ENCODE measurements at regions of chrX and their contacts with region 1.

Region 1: DNA sequence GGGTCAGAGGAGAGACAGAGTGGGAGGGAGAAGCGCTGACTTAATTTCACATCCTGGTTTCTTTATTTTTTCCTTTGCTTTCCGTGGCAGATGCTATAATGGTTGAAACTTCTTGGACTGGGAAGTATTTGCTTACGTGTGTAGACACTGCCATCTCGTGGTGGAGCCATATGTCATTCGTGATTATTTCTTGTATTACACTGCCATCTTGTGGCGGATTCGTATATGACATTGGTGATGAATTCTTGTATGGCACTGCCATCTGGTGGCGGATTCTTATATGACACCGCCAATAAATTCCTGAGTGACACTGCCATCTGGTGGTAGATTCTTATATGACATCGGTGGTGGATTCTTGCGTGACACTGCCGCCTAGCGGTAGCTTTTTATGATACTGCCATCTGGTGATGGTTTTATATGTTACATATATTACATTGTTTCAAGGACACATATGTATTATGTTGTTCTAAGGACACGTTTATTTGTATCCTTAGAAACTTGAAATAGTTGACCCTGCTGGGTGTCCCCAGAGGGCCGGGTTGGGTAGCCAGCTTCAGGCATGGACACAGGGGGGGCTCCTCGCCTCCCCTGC is 37.3 kb upstream of the CLCN4 start:
- DNase-seq: peak; percentile 73
- ATAC-seq: peak; percentile 60
- H3K4me3 ChIP-seq: no peak overlapping the region
- H3K27ac ChIP-seq: no peak overlapping the region
- H3K4me1 ChIP-seq: peaks cover 31% of the 10 kb centered on the region
- H3K27me3 ChIP-seq: no peaks in the 10 kb centered on the region
- CTCF ChIP-seq: peak; percentile 98 to 100 (median 100)
- EP300 ChIP-seq: no peak
- POLR2A ChIP-seq: no peak
- RAD21 ChIP-seq: peak; percentile 89

Region 2: DNA sequence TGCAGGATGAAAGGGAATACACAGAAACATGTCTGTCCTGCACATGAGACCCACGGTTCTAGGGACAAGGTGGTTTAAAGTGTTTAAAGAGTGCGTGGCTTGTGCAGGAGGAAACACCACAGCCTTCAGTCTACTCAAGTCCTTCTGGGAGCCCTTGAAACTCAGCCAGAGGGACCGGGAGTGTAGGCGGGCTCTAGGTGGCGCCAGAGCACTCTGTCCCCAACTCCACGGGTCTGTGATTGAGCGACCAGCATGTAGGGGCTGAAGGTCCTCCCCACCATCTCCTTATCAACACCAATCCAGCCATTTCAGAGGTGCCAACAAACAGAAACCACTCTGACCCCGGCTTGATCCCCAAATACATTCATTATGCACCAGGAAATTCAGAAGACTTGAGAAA is 234.3 kb before region 1 on chrX:
- CTCF ChIA-PET with region 1: interaction called, 25 read pairs
- POLR2A ChIA-PET with region 1: no interaction called
- RAD21 ChIA-PET with region 1: interaction called, 7 read pairs
- SMC1A ChIA-PET with region 1: interaction called, 11 read pairs
- in situ Hi-C with region 1: no loop called
- intact Hi-C with region 1: loop called (anchors 1 kb)
- DNase-seq: no peak
- ATAC-seq: peak; percentile 99
- H3K4me3 ChIP-seq: no peak overlapping the region
- H3K27ac ChIP-seq: no peak overlapping the region
- H3K4me1 ChIP-seq: no peaks in the 10 kb centered on the region
- H3K27me3 ChIP-seq: no peaks in the 10 kb centered on the region; a peak in 2 of 4 replicates
- CTCF ChIP-seq: peak; percentile 79 to 90 (median 85); a peak in 5 of 6 replicates
- EP300 ChIP-seq: no peak
- POLR2A ChIP-seq: no peak
- RAD21 ChIP-seq: peak; percentile 79

Region 3: GRCh38 chrX:9995855-9996339 is 123.6 kb before region 1 on chrX:
- CTCF ChIA-PET with region 1: interaction called, 412 read pairs
- POLR2A ChIA-PET with region 1: interaction called, 42 read pairs
- RAD21 ChIA-PET with region 1: interaction called, 424 read pairs
- SMC1A ChIA-PET with region 1: interaction called, 281 read pairs
- in situ Hi-C with region 1: loop called (anchors 5 kb)
- intact Hi-C with region 1: loop called (anchors 1 kb)
- DNase-seq: no peak
- ATAC-seq: peak; percentile 60
- H3K4me3 ChIP-seq: no peak overlapping the region
- H3K27ac ChIP-seq: no peak overlapping the region
- H3K4me1 ChIP-seq: peaks cover 9% of the 10 kb centered on the region
- H3K27me3 ChIP-seq: no peaks in the 10 kb centered on the region
- CTCF ChIP-seq: peak; percentile 94 to 99 (median 96)
- EP300 ChIP-seq: no peak
- POLR2A ChIP-seq: no peak
- RAD21 ChIP-seq: peak; percentile 98

Region 4: GRCh38 chrX:10052906-10053625 is 66.4 kb before region 1 on chrX:
- CTCF ChIA-PET with region 1: interaction called, 13 read pairs
- POLR2A ChIA-PET with region 1: no interaction called
- RAD21 ChIA-PET with region 1: interaction called, 4 read pairs
- SMC1A ChIA-PET with region 1: interaction called, 5 read pairs
- in situ Hi-C with region 1: no loop called
- intact Hi-C with region 1: no loop called
- DNase-seq: no peak
- ATAC-seq: peak; percentile 59
- H3K4me3 ChIP-seq: no peak overlapping the region
- H3K27ac ChIP-seq: no peak overlapping the region
- H3K4me1 ChIP-seq: no peaks in the 10 kb centered on the region
- H3K27me3 ChIP-seq: peaks cover 0 to 4% of the 10 kb centered on the region in 2 experiments; a peak in 1 of 4 replicates
- CTCF ChIP-seq: no peak
- EP300 ChIP-seq: no peak
- POLR2A ChIP-seq: no peak
- RAD21 ChIP-seq: no peak; the same call in 1 of the 2 replicates

Region 5: DNA sequence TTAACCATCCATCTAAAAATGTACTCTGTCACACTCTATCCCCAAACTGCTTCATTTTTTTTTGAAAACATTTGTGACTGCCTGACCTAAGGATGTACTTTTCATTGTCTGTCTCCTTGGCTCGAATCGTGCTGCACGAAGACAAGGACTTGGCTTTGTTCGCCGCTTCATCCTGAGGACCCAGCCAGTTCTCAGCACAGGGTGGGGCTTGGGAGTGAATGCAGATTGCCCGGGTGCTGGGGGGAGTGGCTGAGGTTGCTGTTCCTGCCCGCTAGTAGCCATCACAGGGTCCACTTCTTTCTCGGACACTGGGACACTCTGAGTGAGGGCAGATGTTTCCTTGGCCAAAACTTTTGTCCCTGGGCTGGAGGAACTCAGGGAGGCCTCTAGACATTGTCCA is 32.8 kb before region 1 on chrX:
- CTCF ChIA-PET with region 1: interaction called, 65 read pairs
- POLR2A ChIA-PET with region 1: interaction called, 3 read pairs
- RAD21 ChIA-PET with region 1: interaction called, 89 read pairs
- SMC1A ChIA-PET with region 1: interaction called, 206 read pairs
- in situ Hi-C with region 1: no loop called
- intact Hi-C with region 1: loop called (anchors 2 kb)
- DNase-seq: no peak
- ATAC-seq: no peak
- H3K4me3 ChIP-seq: no peak overlapping the region
- H3K27ac ChIP-seq: no peak overlapping the region
- H3K4me1 ChIP-seq: peaks cover 21% of the 10 kb centered on the region
- H3K27me3 ChIP-seq: no peaks in the 10 kb centered on the region
- CTCF ChIP-seq: no peak
- EP300 ChIP-seq: no peak
- POLR2A ChIP-seq: no peak
- RAD21 ChIP-seq: no peak

Region 6: DNA sequence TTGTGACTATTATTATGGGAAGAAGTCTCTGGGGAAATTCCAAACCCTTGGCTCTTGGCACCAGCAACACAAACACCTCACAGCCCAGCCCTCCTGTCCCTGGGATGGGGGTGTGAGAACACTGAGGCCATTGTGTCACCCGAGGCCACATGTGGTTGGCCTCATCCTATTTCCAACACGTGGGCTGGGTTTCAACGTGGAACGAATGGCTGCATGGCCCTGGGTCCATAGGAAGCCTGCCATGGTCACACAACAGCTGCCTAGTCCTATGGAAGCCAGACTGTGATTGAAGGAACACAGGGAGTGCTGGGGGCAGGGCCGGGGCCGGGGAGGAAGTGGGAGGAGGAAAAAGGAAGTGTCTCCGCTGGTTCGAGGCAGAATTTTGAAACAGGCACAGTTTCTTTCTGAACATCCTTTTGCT is 47.2 kb after region 1 on chrX:
- CTCF ChIA-PET with region 1: interaction called, 23 read pairs
- POLR2A ChIA-PET with region 1: no interaction called
- RAD21 ChIA-PET with region 1: interaction called, 5 read pairs
- SMC1A ChIA-PET with region 1: interaction called, 5 read pairs
- in situ Hi-C with region 1: no loop called
- intact Hi-C with region 1: loop called (anchors 2 kb)
- DNase-seq: no peak
- ATAC-seq: peak; percentile 35
- H3K4me3 ChIP-seq: no peak overlapping the region
- H3K27ac ChIP-seq: no peak overlapping the region
- H3K4me1 ChIP-seq: peaks cover 17% of the 10 kb centered on the region
- H3K27me3 ChIP-seq: 0 out of 4 replicates have a peak, but pooled peaks cover 0 to under 1% of the 10 kb centered on the region in 2 experiments
- CTCF ChIP-seq: no peak
- EP300 ChIP-seq: no peak
- POLR2A ChIP-seq: no peak
- RAD21 ChIP-seq: no peak

Measured in GM12878 (cell line).